Mammary epithelial cell (primary cell): ENCODE measurements at regions of chr16 and their contacts with region 1.

Region 1: DNA sequence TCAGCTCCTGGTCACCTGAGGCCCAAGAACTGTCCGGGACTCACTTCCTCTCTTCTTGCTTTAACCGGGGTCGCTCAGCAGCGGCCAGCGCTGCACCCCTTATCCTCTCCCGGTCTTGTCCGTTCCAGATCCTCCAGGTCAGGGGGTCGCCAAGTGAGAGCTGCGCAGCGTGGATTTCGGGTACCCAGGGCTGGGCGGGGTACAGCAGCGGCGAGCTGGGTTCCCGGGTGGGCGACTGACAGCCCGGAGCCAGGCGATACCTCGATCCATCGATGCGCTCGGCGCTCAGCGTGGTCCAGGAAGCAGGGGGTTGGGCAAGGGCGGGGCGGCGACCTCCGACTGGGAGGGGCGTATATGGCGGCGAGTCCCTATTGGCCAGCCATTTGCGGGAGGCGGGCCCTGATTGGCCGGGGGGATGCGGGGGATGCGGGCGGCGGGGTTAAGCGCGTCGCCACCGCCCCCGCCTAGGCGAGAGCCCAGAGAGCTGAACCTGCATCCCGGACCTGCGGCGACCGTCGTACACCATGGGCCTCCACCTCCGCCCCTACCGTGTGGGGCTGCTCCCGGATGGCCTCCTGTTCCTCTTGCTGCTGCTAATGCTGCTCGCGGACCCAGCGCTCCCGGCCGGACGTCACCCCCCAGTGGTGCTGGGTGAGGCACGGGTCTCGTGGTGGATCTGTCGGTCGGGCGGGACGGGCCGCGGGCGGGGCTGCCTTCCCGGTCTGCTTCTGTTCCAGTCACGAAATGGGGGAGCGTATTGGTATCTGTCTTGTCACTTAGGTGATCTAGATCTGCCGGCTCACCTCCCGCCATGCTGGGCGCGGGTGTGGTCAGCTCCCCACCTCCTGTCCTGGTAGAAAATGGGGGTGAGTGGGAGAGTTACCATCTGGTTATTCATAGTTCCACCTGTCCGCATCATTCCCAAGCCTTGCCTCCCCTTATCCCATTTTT is at the start of gene PLA2G15:
- DNase-seq: peak; percentile 93
- H3K4me3 ChIP-seq: peak within 1 kb of the TSS; percentile 53 to 98 (median 95)
- H3K27ac ChIP-seq: no peak within 1 kb of the TSS
- H3K4me1 ChIP-seq: peaks cover 20% of the 10 kb centered on the region
- H3K27me3 ChIP-seq: no peaks in the 10 kb centered on the region
- CTCF ChIP-seq: peak in 1 of 2 donors; percentile 7
- total RNA-seq, gene PLA2G15: 12.4 to 19.8 TPM

Region 2: GRCh38 chr16:68401871-68402747 is 156.9 kb after region 1 on chr16:
- CTCF ChIA-PET with region 1: no interaction called
- dilution Hi-C with region 1: loop called (anchors 5 kb)
- in situ Hi-C with region 1: no loop called
- intact Hi-C with region 1: no loop called
- DNase-seq: peak; percentile 41
- H3K4me3 ChIP-seq: no peak overlapping the region
- H3K27ac ChIP-seq: no peak overlapping the region
- H3K4me1 ChIP-seq: peaks cover 8% of the 10 kb centered on the region
- H3K27me3 ChIP-seq: peaks cover 8% of the 10 kb centered on the region
- CTCF ChIP-seq: no peak

Region 3: DNA sequence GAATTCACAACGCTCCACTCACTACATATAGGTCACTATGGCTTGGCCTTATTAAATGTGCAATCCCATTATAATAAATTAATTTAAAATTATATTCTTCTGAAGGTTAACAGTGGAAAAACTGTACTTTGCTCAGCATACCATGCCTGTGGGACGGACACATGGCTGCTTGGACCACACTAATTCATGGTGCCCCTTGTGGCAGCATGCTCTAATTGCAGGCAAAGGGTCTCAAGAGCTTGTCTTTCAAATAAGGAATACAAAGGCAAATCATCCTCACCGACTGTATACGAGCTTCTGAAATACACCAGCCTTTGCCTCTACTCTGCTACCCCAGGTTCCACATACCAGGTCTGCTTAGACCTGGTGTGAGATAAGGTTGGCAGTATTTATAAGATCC is 191.4 kb after region 1 on chr16:
- CTCF ChIA-PET with region 1: interaction called, 12 read pairs
- dilution Hi-C with region 1: no loop called
- in situ Hi-C with region 1: no loop called
- intact Hi-C with region 1: no loop called
- DNase-seq: no peak
- H3K4me3 ChIP-seq: no peak overlapping the region
- H3K27ac ChIP-seq: no peak overlapping the region
- H3K4me1 ChIP-seq: no peaks in the 10 kb centered on the region
- H3K27me3 ChIP-seq: peaks cover 3% of the 10 kb centered on the region
- CTCF ChIP-seq: peak; percentile 29 to 34